Motor neuron (in vitro differentiated cells): ENCODE measurements at regions of chr21 and their contacts with region 1.

Region 1: GRCh38 chr21:31098576-31099005 is 60.3 kb upstream of the KRTAP19-8 start:
- ATAC-seq: peak in 4 of 8 experiments; percentile 22 to 94 (median 82)
- H3K4me3 ChIP-seq: no peak overlapping the region
- H3K27ac ChIP-seq: no peak overlapping the region
- H3K4me1 ChIP-seq: no peaks in the 10 kb centered on the region

Region 2: GRCh38 chr21:29078869-29079767 is 2019.5 kb before region 1 on chr21:
- in situ Hi-C with region 1: loop called in 2 of 9 experiments (anchors 25 kb)
- ATAC-seq: peak in 3 of 8 experiments; percentile 35 to 72 (median 47)
- H3K4me3 ChIP-seq: no peak overlapping the region
- H3K27ac ChIP-seq: no peak overlapping the region
- H3K4me1 ChIP-seq: peaks cover 1 to 7% of the 10 kb centered on the region in 2 donors

Region 3: GRCh38 chr21:30719401-30719800 is 379.2 kb before region 1 on chr21:
- in situ Hi-C with region 1: no loop called
- ATAC-seq: peak in 4 of 8 experiments; percentile 70 to 88 (median 82)
- H3K4me3 ChIP-seq: no peak overlapping the region
- H3K27ac ChIP-seq: no peak overlapping the region
- H3K4me1 ChIP-seq: no peaks in the 10 kb centered on the region

Region 4: GRCh38 chr21:30831194-30831765 is 267.3 kb before region 1 on chr21:
- in situ Hi-C with region 1: loop called in 1 of 9 experiments (anchors 25 kb)
- ATAC-seq: peak in 2 of 8 experiments; percentile 32 to 54
- H3K4me3 ChIP-seq: no peak overlapping the region
- H3K27ac ChIP-seq: no peak overlapping the region
- H3K4me1 ChIP-seq: no peaks in the 10 kb centered on the region

Region 5: DNA sequence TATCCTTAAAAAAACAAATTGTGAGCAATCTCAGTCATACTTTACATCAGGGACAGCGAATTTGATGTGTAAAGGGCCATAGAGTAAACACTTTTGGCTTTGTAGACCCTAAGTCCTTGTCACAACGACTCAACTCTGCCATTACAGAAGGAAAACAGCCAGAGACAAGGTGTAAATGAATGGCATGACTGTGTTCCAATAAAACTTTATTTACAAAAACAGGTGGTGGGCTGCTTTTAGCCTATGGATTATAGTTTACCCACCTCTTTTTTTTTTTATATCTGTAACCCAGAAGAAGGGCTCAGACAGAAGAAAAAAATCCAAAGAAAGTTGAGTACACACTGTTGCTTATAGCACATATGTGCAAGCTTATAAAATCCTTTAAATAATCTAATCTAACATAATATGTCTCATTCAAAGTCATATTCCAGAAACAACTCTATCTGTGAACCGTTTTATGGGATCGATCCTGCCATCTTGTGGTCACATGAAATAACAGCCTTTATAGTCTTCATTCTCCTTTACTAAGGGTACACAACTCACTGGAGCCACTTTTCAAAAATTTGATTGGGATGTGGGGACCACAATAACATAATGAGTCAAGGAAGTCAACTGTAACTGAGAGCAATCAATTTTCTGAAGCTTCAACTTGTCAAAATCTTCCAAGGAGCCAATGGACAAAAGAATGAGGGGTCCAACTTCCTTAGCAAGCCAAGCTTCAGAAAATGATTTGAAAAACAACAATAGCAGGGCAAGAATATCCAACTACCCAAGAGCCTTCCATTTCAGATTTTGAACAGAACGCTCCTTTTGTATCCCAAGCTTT is 81.9 kb after region 1 on chr21:
- in situ Hi-C with region 1: loop called in 1 of 9 experiments (anchors 5 kb)
- ATAC-seq: peak in 4 of 8 experiments; percentile 32 to 74 (median 64)
- H3K4me3 ChIP-seq: no peak overlapping the region
- H3K27ac ChIP-seq: no peak overlapping the region
- H3K4me1 ChIP-seq: no peaks in the 10 kb centered on the region